H1 (cell line): ENCODE measurements at regions of chr16 and their contacts with region 1.

Region 1: DNA sequence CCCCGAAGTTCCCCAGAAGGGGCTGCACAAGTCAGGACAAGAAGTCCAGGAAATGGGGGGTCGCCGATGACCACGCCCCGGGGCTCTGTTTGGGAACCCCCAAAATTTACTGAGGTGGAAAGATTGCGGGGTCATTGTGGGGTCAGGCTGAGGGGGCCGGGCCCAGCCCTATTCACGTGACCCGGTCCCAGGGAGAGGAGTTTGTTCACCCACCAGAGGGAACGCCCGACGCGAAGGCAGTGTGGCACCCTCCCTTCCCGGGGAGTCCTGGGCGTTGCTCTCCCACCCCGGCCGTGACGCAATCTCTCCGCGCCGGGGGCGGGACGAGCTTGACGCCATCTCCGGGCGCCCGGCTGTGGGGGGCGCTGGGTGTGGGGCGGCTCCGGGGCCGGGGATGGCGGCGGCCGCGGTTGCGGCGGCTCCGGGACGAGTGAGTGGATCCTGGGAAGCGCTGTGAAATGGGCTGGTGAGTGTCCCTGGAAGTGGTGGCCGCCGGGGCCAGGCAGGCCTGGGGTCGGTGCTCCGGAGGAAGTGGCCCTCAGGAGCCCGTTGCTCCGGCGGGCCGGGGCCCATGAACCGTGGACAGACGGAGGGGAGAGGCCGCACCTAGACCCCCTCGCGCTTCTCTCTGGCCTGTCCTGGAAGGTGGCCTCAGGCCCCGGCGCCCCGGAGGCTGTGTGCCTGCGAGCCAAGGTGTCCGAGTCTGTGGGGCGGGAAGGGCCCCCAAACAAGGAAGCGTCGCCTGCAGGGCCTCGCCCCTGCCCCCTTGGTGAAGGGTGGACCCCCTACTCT is at the start of gene ATXN1L:
- DNase-seq: peak; percentile 50 to 98
- H3K4me3 ChIP-seq: peak within 1 kb of the TSS; percentile 78 to 97 (median 94)
- H3K27ac ChIP-seq: peak within 1 kb of the TSS; percentile 87
- H3K4me1 ChIP-seq: peaks cover 0 to 5% (median 0%) of the 10 kb centered on the region in 4 experiments; a peak in 2 of 7 replicates
- H3K27me3 ChIP-seq: no peaks in the 10 kb centered on the region
- CTCF ChIP-seq: peak in 1 of 3 experiments; percentile 2; a peak in 1 of 4 replicates
- EP300 ChIP-seq: peak in 1 of 2 experiments; percentile 82; a peak in 1 of 3 replicates
- POLR2A ChIP-seq: peak; percentile 89 to 95
- RAD21 ChIP-seq: no peak
- total RNA-seq, gene ATXN1L: 20.8 and 23.8 TPM in 2 replicates

Region 2: GRCh38 chr16:71628810-71629209 is 217.0 kb before region 1 on chr16:
- CTCF ChIA-PET with region 1: no interaction called
- POLR2A ChIA-PET with region 1: no interaction called
- DNase-seq: no peak
- H3K4me3 ChIP-seq: no peak overlapping the region
- H3K27ac ChIP-seq: no peak overlapping the region
- H3K4me1 ChIP-seq: peaks cover 0 to 12% (median 6%) of the 10 kb centered on the region in 4 experiments; a peak in 6 of 7 replicates
- H3K27me3 ChIP-seq: no peaks in the 10 kb centered on the region
- CTCF ChIP-seq: no peak
- EP300 ChIP-seq: no peak
- POLR2A ChIP-seq: no peak
- RAD21 ChIP-seq: no peak

Region 3: GRCh38 chr16:71808593-71809459 is 37.0 kb before region 1 on chr16 and contains the start of gene AP1G1:
- CTCF ChIA-PET with region 1: interaction called, 4 read pairs
- POLR2A ChIA-PET with region 1: interaction called, 11 read pairs
- DNase-seq: peak; percentile 88 to 92
- H3K4me3 ChIP-seq: peak within 1 kb of the TSS; percentile 81 to 97 (median 86)
- H3K27ac ChIP-seq: peak within 1 kb of the TSS; percentile 100
- H3K4me1 ChIP-seq: peaks cover 0 to 3% (median 0%) of the 10 kb centered on the region in 4 experiments; a peak in 2 of 7 replicates
- H3K27me3 ChIP-seq: no peaks in the 10 kb centered on the region
- CTCF ChIP-seq: no peak
- EP300 ChIP-seq: peak; percentile 10 to 75; a peak in 2 of 3 replicates
- POLR2A ChIP-seq: peak; percentile 62 to 86
- RAD21 ChIP-seq: no peak
- total RNA-seq, gene AP1G1: 67.9 and 68.4 TPM in 2 replicates

Region 4: DNA sequence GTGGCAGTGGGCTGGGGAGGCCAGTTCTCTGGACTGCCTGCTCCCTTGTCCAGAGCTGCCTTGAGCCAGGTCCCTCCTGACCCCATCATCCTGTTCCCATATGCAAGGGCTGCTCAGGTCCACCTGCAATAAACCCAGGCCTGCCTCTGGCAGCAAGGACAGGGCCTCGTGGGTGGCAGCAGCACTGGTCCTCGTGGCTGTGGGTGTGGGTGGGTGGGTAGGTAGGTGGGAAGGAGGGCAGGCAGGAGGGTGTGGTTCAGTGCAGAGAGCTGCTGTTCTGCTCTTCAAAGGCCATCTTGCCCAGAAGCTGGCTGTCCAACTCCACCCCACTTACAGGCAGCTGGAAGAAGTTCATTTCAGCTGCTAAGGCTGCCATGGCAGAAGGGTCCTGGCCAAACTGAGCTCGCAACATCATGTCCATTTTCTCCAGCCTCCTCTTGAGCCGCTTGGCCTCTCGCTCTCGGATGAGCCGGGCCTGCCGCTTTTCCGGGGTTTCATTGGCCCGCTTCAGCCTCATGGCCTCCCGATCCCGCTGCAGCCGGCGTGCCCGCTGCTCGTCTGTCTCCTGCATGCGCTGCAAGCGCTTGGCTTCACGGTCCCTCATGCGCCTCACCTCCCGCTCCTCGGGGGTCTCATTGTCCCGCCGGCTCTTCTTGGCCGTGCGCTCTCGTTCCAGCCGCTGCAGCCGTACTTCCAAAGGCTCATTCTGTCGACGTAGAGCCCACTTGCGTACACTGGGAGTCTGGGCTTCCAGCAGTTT is 14.1 kb after region 1 on chr16:
- CTCF ChIA-PET with region 1: interaction called, 3 read pairs
- POLR2A ChIA-PET with region 1: interaction called, 15 read pairs
- DNase-seq: no peak
- H3K4me3 ChIP-seq: no peak overlapping the region
- H3K27ac ChIP-seq: no peak overlapping the region
- H3K4me1 ChIP-seq: no peaks in the 10 kb centered on the region
- H3K27me3 ChIP-seq: no peaks in the 10 kb centered on the region
- CTCF ChIP-seq: no peak
- EP300 ChIP-seq: no peak
- POLR2A ChIP-seq: no peak
- RAD21 ChIP-seq: no peak